PC-3 (cell line): ENCODE measurements at regions of chr11 and their contacts with region 1.

Region 1: GRCh38 chr11:32713496-32713895 is 81.0 kb downstream of the CCDC73 start:
- DNase-seq: peak; percentile 46
- ATAC-seq: peak; percentile 53
- H3K4me3 ChIP-seq: no peak overlapping the region
- H3K27ac ChIP-seq: no peak overlapping the region
- H3K4me1 ChIP-seq: peaks cover 8% of the 10 kb centered on the region
- H3K27me3 ChIP-seq: no peaks in the 10 kb centered on the region
- CTCF ChIP-seq: peak; percentile 71

Region 2: GRCh38 chr11:32658639-32659406 is 54.7 kb before region 1 on chr11:
- CTCF ChIA-PET with region 1: interaction called, 4 read pairs
- POLR2A ChIA-PET with region 1: no interaction called
- intact Hi-C with region 1: loop called (anchors 5 kb)
- DNase-seq: peak; percentile 91
- ATAC-seq: peak; percentile 85
- H3K4me3 ChIP-seq: peak overlapping the region; percentile 49
- H3K27ac ChIP-seq: peak overlapping the region; percentile 97
- H3K4me1 ChIP-seq: peaks cover 32% of the 10 kb centered on the region
- H3K27me3 ChIP-seq: no peaks in the 10 kb centered on the region
- CTCF ChIP-seq: no peak

Region 3: GRCh38 chr11:32701616-32702015 is 11.9 kb before region 1 on chr11:
- CTCF ChIA-PET with region 1: no interaction called
- POLR2A ChIA-PET with region 1: no interaction called
- intact Hi-C with region 1: no loop called
- DNase-seq: no peak
- ATAC-seq: no peak
- H3K4me3 ChIP-seq: no peak overlapping the region
- H3K27ac ChIP-seq: no peak overlapping the region
- H3K4me1 ChIP-seq: peaks cover 19% of the 10 kb centered on the region
- H3K27me3 ChIP-seq: no peaks in the 10 kb centered on the region
- CTCF ChIP-seq: no peak

Region 4: DNA sequence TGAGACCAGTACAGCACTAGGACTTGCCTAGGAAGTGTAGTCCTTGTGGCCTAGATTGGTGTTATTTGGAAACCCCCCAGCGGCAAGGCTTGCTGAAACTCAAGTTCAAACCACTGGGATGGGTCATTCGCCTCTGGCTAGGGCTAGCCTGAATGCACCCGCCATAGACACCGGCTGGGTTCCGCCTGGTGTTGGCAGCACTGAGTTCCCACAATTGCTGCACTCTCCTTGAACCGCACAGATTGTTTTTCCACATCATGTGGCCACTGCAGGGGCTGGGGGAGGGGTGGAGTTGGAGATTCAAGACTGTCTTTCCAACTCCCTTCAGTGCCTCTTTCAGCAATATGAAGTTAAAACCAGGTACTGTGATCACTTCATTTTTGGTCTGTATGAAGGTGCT is 37.9 kb after region 1 on chr11:
- CTCF ChIA-PET with region 1: no interaction called
- POLR2A ChIA-PET with region 1: no interaction called
- intact Hi-C with region 1: loop called (anchors 5 kb)
- DNase-seq: no peak
- ATAC-seq: no peak
- H3K4me3 ChIP-seq: no peak overlapping the region
- H3K27ac ChIP-seq: no peak overlapping the region
- H3K4me1 ChIP-seq: no peaks in the 10 kb centered on the region
- H3K27me3 ChIP-seq: no peaks in the 10 kb centered on the region
- CTCF ChIP-seq: no peak

Region 5: DNA sequence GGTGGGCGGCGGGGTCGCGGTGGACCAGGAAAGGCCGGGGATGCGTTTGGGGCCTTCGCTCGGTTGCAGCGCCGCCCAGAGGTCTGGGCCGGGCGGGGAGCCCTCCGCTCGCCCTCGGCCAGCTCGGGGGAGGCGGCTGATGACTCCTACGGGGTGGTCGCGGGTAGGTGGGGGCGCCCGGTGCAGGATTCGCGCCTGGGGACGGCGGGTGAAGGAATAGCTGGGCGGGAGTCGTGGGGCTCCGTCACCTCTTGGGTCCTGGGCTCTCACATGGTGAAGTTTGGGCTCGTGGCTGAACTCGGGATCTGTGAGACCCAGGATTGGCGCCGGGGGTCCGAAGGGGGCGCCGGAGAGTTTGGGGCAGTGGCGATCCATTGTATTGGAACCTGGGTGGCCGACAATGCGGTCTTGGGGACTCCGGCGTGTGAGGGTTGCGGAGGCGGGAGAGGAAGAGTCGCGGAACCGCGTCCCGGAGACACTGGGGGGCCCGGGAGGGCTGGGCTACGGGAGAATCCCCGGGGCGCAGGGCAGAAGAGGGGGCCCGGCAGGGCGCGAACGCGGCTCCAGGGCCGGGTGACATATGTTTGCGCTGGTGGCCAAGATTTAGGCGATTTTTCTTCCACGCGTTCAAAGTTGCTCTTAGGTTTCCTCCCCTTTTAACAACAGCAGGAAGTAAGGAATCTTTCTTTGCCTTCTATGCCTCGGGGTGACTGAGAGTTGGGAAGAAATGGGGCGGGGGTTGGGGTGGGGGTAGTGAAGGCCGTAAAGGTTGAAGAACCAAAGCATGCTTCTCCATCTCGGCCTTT is 180.1 kb after region 1 on chr11:
- CTCF ChIA-PET with region 1: no interaction called
- POLR2A ChIA-PET with region 1: no interaction called
- intact Hi-C with region 1: loop called (anchors 5 kb)
- DNase-seq: peak; percentile 32
- ATAC-seq: peak; percentile 37
- H3K4me3 ChIP-seq: peak overlapping the region; percentile 80
- H3K27ac ChIP-seq: peak overlapping the region; percentile 64
- H3K4me1 ChIP-seq: peaks cover 28% of the 10 kb centered on the region
- H3K27me3 ChIP-seq: no peaks in the 10 kb centered on the region
- CTCF ChIP-seq: peak; percentile 57

Region 6: DNA sequence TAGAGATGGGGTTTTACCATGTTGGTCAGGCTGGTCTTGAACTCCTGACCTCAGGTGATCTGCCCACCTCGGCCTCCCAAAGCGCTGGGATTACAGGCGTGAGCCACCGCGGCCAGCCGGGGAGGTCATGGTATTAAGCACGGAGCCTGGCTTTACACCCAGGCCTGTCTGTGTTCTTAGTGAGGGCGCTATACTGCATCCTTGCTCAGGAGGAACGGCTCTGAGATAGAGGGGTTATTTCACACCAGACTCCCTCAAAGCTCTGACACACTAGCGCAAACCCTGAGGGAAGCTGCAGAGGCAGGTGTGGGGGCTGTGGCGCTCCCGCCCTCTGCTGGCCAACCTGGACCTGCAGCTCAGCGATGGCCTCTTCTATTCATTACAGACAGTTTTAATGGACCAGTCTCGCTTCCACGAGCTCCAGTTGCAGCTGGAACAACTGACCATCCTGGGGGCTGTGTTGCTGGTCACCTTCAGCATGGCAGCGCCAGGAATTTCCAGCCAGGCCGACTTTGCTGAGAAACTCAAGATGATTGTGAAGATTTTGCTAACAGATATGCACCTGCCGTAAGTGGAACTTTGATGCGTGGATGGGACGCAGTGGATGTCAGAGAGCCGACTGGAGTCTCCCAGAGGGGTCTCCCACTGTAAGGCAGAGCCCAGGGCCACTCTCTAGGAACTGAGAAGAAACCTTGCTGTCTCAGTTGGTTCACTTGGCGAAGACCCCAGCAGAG is 352.1 kb after region 1 on chr11:
- CTCF ChIA-PET with region 1: no interaction called
- POLR2A ChIA-PET with region 1: no interaction called
- intact Hi-C with region 1: loop called (anchors 10 kb)
- DNase-seq: peak; percentile 66
- ATAC-seq: peak; percentile 88
- H3K4me3 ChIP-seq: no peak overlapping the region
- H3K27ac ChIP-seq: no peak overlapping the region
- H3K4me1 ChIP-seq: peaks cover 11% of the 10 kb centered on the region
- H3K27me3 ChIP-seq: no peaks in the 10 kb centered on the region
- CTCF ChIP-seq: peak; percentile 84